Aorta (tissue), 5 donors: ENCODE measurements at regions of chr15 and their contacts with region 1.

Region 1: GRCh38 chr15:99273801-99274200 is 22.5 kb downstream of the LRRC28 start:
- DNase-seq: no peak
- ATAC-seq: no peak
- H3K4me3 ChIP-seq: no peak overlapping the region
- H3K27ac ChIP-seq: no peak overlapping the region
- H3K4me1 ChIP-seq: no peaks in the 10 kb centered on the region
- H3K27me3 ChIP-seq: no peaks in the 10 kb centered on the region

Region 2: GRCh38 chr15:98978153-98978552 is 295.6 kb before region 1 on chr15:
- intact Hi-C with region 1: no loop called
- DNase-seq: no peak
- ATAC-seq: no peak
- H3K4me3 ChIP-seq: no peak overlapping the region
- H3K27ac ChIP-seq: no peak overlapping the region
- H3K4me1 ChIP-seq: no peaks in the 10 kb centered on the region
- H3K27me3 ChIP-seq: no peaks in the 10 kb centered on the region

Region 3: GRCh38 chr15:99305761-99306505 is 32.1 kb after region 1 on chr15:
- intact Hi-C with region 1: no loop called
- DNase-seq: peak; percentile 87 to 92
- ATAC-seq: peak; percentile 56
- H3K4me3 ChIP-seq: no peak overlapping the region
- H3K27ac ChIP-seq: no peak overlapping the region
- H3K4me1 ChIP-seq: peaks cover 3 to 4% of the 10 kb centered on the region in 2 donors
- H3K27me3 ChIP-seq: no peaks in the 10 kb centered on the region

Region 4: GRCh38 chr15:99733268-99734039 is 459.7 kb after region 1 on chr15 and contains the start of gene LYSMD4:
- intact Hi-C with region 1: loop called in 1 of 2 experiments (anchors 5 kb)
- DNase-seq: peak; percentile 99 to 100
- ATAC-seq: peak; percentile 98
- H3K4me3 ChIP-seq: peak within 1 kb of the TSS; percentile 88 to 92
- H3K27ac ChIP-seq: peak within 1 kb of the TSS in 1 of 2 donors; percentile 71
- H3K4me1 ChIP-seq: no peaks in the 10 kb centered on the region
- H3K27me3 ChIP-seq: no peaks in the 10 kb centered on the region
- total RNA-seq, gene LYSMD4: 7.7 to 14.3 TPM

Region 5: GRCh38 chr15:99755692-99756409 is 482.1 kb after region 1 on chr15:
- intact Hi-C with region 1: loop called in 1 of 2 experiments (anchors 2 kb)
- DNase-seq: peak in 1 of 2 donors; percentile 61
- ATAC-seq: peak; percentile 78
- H3K4me3 ChIP-seq: no peak overlapping the region
- H3K27ac ChIP-seq: no peak overlapping the region
- H3K4me1 ChIP-seq: no peaks in the 10 kb centered on the region
- H3K27me3 ChIP-seq: no peaks in the 10 kb centered on the region